Mammary epithelial cell (primary cell): ENCODE measurements at regions of chr10 and their contacts with region 1.

Region 1: DNA sequence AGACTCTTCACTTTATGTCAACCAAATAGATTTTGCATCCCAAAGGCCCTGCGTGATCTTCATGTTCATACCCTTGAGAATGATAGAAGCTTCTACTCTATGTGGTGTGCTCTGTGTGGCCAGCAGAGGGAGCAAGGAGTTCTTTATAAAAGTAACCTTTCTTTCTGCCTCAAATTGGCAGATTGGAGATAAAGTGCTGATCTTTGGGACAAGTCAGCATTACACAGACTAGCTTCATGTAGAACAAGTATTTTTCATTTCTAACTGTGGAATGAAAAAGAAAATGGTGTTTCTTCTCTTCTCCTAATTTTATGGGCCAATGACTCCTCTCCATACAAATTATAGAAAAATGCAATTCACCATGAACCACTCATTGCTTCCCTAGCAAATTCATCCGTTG is 1214.1 kb downstream of the SORCS1 start:
- DNase-seq: peak; percentile 25
- H3K4me3 ChIP-seq: no peak overlapping the region
- H3K27ac ChIP-seq: no peak overlapping the region
- H3K4me1 ChIP-seq: peaks cover 4% of the 10 kb centered on the region
- H3K27me3 ChIP-seq: no peaks in the 10 kb centered on the region
- CTCF ChIP-seq: peak; percentile 86

Region 2: DNA sequence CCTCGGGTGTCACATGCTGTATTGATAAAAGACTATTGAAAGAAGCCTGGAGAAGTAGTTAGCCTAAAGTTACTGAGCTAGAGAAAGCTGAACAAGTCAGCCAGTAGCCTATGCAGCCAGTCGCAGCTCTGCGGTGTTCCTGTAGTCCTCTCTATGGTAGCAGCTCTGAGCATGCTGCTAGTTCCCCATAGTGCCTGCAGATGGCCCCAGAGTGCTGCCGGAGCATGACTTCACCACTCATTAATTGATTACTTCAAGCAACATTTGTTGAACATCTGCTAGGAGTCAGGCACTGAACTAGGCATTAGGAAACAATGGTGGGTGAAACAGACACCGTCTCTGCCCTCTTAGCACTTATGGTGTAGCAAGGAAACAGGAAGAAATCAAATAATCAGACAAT is 886.6 kb before region 1 on chr10:
- CTCF ChIA-PET with region 1: no interaction called
- dilution Hi-C with region 1: no loop called
- in situ Hi-C with region 1: no loop called
- intact Hi-C with region 1: loop called (anchors 10 kb)
- DNase-seq: peak; percentile 33
- H3K4me3 ChIP-seq: no peak overlapping the region
- H3K27ac ChIP-seq: no peak overlapping the region
- H3K4me1 ChIP-seq: no peaks in the 10 kb centered on the region
- H3K27me3 ChIP-seq: no peaks in the 10 kb centered on the region
- CTCF ChIP-seq: peak; percentile 88 to 95

Region 3: GRCh38 chr10:105797234-105797890 is 153.0 kb before region 1 on chr10:
- CTCF ChIA-PET with region 1: no interaction called
- dilution Hi-C with region 1: no loop called
- in situ Hi-C with region 1: no loop called
- intact Hi-C with region 1: loop called (anchors 5 kb)
- DNase-seq: peak; percentile 48
- H3K4me3 ChIP-seq: no peak overlapping the region
- H3K27ac ChIP-seq: no peak overlapping the region
- H3K4me1 ChIP-seq: no peaks in the 10 kb centered on the region
- H3K27me3 ChIP-seq: no peaks in the 10 kb centered on the region
- CTCF ChIP-seq: peak; percentile 53 to 68

Region 4: DNA sequence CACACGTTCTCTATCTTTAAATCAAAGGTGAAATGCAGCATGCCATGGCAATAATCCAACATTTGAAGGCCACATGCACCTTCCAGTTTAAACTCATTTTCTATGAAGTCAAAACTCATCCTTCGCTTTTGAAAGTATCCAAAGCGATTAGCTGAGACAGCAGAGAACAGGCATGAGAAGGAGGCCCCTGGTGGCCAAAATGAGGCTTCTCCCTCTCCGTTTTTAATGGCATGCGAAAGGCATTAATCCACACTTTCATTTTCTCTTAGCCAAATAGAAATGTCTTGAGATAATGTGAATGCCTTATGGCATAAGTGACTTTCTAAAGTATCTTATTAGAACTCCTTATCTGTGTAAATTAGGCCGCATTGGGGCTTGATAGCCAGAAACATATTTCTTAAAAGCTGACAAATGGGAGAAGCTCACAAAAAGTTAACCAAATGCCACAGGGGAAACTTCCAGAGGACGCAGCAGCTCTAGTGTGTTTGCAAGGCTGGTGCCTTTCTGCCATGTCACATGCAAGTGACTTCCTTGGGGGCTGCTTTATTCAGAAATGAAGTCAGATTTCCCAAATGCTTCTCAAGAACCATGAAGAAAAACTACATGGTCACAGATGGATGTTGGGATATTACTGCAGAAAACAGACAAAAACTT is 24.5 kb after region 1 on chr10:
- CTCF ChIA-PET with region 1: no interaction called
- dilution Hi-C with region 1: no loop called
- in situ Hi-C with region 1: no loop called
- intact Hi-C with region 1: loop called (anchors 1 kb)
- DNase-seq: peak; percentile 17
- H3K4me3 ChIP-seq: peak overlapping the region; percentile 1 to 29 (median 16)
- H3K27ac ChIP-seq: no peak overlapping the region
- H3K4me1 ChIP-seq: no peaks in the 10 kb centered on the region
- H3K27me3 ChIP-seq: peaks cover 4% of the 10 kb centered on the region
- CTCF ChIP-seq: peak; percentile 62 to 83

Region 5: DNA sequence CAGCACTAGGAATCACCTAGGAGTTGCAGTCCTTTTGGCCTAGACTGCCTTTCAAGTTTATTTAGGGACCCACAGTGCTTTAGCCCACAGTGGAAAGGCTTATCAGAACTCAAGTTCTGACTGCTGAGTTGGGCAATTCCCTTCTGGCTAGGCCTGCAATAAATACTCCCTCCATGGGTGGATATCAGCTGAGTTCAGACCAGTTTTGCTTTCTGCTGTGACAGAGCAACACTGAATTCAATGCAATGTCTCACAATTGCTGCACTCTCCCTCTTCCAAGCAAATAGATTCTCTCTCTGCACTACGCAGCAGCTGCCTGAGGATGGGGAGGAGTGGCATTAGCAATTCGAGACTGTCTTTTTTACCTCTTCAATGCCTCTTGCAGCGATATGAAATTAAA is 60.8 kb after region 1 on chr10:
- CTCF ChIA-PET with region 1: no interaction called
- dilution Hi-C with region 1: no loop called
- in situ Hi-C with region 1: no loop called
- intact Hi-C with region 1: no loop called
- DNase-seq: no peak
- H3K4me3 ChIP-seq: no peak overlapping the region
- H3K27ac ChIP-seq: no peak overlapping the region
- H3K4me1 ChIP-seq: no peaks in the 10 kb centered on the region
- H3K27me3 ChIP-seq: no peaks in the 10 kb centered on the region
- CTCF ChIP-seq: no peak

Region 6: DNA sequence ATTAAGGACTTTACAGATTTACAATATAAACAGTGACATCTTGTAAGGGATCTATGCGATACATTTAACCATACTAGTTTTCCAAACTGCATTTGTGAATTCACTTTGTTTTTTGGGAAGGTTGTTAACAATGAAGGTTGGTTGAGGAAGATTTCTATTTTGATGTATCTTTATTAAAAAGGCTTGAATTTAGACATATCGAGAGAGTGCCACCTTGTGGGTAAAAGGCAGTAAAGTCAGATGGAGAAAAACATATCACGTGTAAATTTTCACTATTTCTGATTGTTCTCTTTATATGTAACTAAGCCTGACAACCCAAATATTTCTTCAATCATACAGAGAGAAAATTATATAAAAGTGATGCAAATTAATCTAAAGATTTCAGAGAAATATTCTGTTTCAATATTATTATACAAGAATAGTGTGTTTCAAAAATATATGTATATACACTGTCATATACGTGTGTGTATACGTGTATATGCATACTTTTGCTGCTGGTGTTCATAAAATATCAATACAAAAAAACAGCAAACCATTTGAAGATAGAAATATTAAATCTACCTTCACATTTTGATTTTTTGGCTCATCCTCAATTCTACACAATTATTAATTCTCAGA is 225.5 kb after region 1 on chr10:
- CTCF ChIA-PET with region 1: no interaction called
- dilution Hi-C with region 1: no loop called
- in situ Hi-C with region 1: loop called (anchors 10 to 25 kb)
- intact Hi-C with region 1: loop called (anchors 1 kb)
- DNase-seq: peak; percentile 8
- H3K4me3 ChIP-seq: no peak overlapping the region
- H3K27ac ChIP-seq: no peak overlapping the region
- H3K4me1 ChIP-seq: no peaks in the 10 kb centered on the region
- H3K27me3 ChIP-seq: no peaks in the 10 kb centered on the region
- CTCF ChIP-seq: peak; percentile 52 to 64

Region 7: GRCh38 chr10:106189292-106189691 is 238.9 kb after region 1 on chr10:
- CTCF ChIA-PET with region 1: no interaction called
- dilution Hi-C with region 1: no loop called
- in situ Hi-C with region 1: loop called (anchors 10 to 25 kb)
- intact Hi-C with region 1: no loop called
- DNase-seq: no peak
- H3K4me3 ChIP-seq: no peak overlapping the region
- H3K27ac ChIP-seq: no peak overlapping the region
- H3K4me1 ChIP-seq: no peaks in the 10 kb centered on the region
- H3K27me3 ChIP-seq: no peaks in the 10 kb centered on the region
- CTCF ChIP-seq: peak; percentile 51 to 67

Region 8: GRCh38 chr10:106682175-106682574 is 731.8 kb after region 1 on chr10:
- CTCF ChIA-PET with region 1: no interaction called
- dilution Hi-C with region 1: no loop called
- in situ Hi-C with region 1: no loop called
- intact Hi-C with region 1: loop called (anchors 5 kb)
- DNase-seq: no peak
- H3K4me3 ChIP-seq: no peak overlapping the region
- H3K27ac ChIP-seq: no peak overlapping the region
- H3K4me1 ChIP-seq: no peaks in the 10 kb centered on the region
- H3K27me3 ChIP-seq: peaks cover 2% of the 10 kb centered on the region
- CTCF ChIP-seq: peak in 1 of 2 donors; percentile 12